ENCODE measurements at regions of chr1 and their contacts with region 1.

Region 1: DNA sequence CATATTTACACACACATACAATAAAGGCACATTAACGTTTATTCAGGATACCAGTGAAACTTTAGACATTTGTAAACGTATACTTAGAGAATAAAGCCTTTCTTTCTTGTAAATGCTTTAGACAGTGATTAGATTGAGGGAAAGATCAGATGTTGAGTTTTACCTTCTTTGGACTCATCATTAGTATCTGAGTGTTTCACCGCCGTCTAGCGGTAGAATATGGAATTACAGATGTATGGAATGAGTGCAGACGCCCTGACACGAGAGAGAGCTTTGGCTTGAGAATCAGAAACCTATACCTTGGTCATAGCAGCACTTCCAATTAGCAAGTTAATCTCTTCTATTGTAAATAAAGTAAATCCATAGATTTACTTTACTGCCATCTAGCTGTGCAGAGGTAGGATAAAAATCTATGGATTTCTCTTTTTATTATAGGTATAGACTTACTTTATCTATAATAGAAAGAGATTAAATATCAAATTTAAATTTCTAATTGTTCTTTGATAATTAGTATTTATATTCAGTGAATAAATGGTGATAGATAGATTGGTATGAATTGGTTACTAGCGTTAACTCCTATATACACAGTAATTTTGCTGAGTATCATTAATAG is 12.6 kb downstream of the FLG2 start:
- DNase-seq: peak; percentile 52
- ATAC-seq: peak; percentile 75; the same call in 1 of the 2 replicates
- H3K4me3 ChIP-seq: no peak overlapping the region
- H3K27ac ChIP-seq: no peak overlapping the region
- H3K4me1 ChIP-seq: no peaks in the 10 kb centered on the region
- H3K27me3 ChIP-seq: no peaks in the 10 kb centered on the region
- CTCF ChIP-seq: peak; percentile 62
- POLR2A ChIP-seq: no peak
- RAD21 ChIP-seq: peak; percentile 31

Region 2: GRCh38 chr1:152386940-152387339 is 39.7 kb after region 1 on chr1:
- CTCF ChIA-PET with region 1: no interaction called
- POLR2A ChIA-PET with region 1: no interaction called
- dilution Hi-C with region 1: no loop called
- in situ Hi-C with region 1: no loop called
- intact Hi-C with region 1: no loop called
- DNase-seq: no peak
- ATAC-seq: no peak
- H3K4me3 ChIP-seq: no peak overlapping the region
- H3K27ac ChIP-seq: no peak overlapping the region
- H3K4me1 ChIP-seq: no peaks in the 10 kb centered on the region
- H3K27me3 ChIP-seq: no peaks in the 10 kb centered on the region
- CTCF ChIP-seq: no peak
- POLR2A ChIP-seq: no peak
- RAD21 ChIP-seq: no peak

Region 3: GRCh38 chr1:152459596-152460528 is 112.6 kb after region 1 on chr1:
- CTCF ChIA-PET with region 1: interaction called, 4 read pairs
- POLR2A ChIA-PET with region 1: no interaction called
- dilution Hi-C with region 1: no loop called
- in situ Hi-C with region 1: no loop called
- intact Hi-C with region 1: loop called (anchors 5 kb)
- DNase-seq: peak; percentile 52
- ATAC-seq: peak; percentile 76
- H3K4me3 ChIP-seq: no peak overlapping the region
- H3K27ac ChIP-seq: no peak overlapping the region
- H3K4me1 ChIP-seq: no peaks in the 10 kb centered on the region
- H3K27me3 ChIP-seq: no peaks in the 10 kb centered on the region
- CTCF ChIP-seq: peak; percentile 70
- POLR2A ChIP-seq: no peak
- RAD21 ChIP-seq: peak; percentile 19; the same call in 1 of the 2 replicates